ENCODE measurements at regions of chr1 and their contacts with region 1.

Region 1: DNA sequence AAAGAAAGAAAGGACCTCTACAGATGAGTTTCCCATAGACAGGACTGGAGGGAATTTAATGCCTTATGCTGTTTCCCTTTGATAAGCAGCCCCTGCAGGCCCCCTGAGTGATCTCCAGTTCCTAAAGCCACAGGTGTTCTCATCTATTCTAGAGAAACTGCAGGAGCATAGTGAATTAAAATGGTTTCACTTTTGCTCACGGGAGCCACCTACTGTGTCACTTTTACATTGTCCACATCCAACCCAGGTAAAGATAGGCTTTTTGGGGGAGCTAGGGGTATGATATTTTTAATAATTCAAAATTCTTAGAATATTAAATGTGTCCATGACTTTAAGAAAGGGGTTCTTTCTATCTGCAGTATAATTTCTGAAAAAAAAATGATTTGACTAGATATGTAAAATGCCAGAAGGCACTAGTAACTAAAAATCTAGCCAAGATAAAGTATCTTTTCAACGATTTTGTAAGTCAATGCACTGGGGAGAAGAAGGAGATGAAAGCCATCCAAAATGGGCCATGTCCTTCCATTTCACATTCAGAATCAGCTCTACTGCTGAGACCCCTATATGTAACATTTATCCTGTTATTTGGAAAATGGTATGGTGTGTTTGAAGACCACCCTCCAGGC is 267.3 kb upstream of the DUSP10 start:
- DNase-seq: no peak
- H3K4me3 ChIP-seq: no peak overlapping the region
- H3K27ac ChIP-seq: no peak overlapping the region
- H3K4me1 ChIP-seq: no peaks in the 10 kb centered on the region
- H3K27me3 ChIP-seq: no peaks in the 10 kb centered on the region
- CTCF ChIP-seq: peak; percentile 39

Region 2: GRCh38 chr1:221462345-221462744 is 546.9 kb before region 1 on chr1:
- intact Hi-C with region 1: loop called (anchors 10 kb)
- DNase-seq: no peak
- H3K4me3 ChIP-seq: no peak overlapping the region
- H3K27ac ChIP-seq: no peak overlapping the region
- H3K4me1 ChIP-seq: no peaks in the 10 kb centered on the region
- H3K27me3 ChIP-seq: no peaks in the 10 kb centered on the region
- CTCF ChIP-seq: no peak

Region 3: GRCh38 chr1:221741711-221742554 is 267.3 kb before region 1 on chr1 and contains the start of gene DUSP10:
- intact Hi-C with region 1: loop called (anchors 10 kb)
- DNase-seq: peak; percentile 99
- H3K4me3 ChIP-seq: peak within 1 kb of the TSS; percentile 65
- H3K27ac ChIP-seq: peak within 1 kb of the TSS; percentile 100
- H3K4me1 ChIP-seq: peaks cover 4% of the 10 kb centered on the region
- H3K27me3 ChIP-seq: no peaks in the 10 kb centered on the region
- CTCF ChIP-seq: no peak
- total RNA-seq, gene DUSP10: 2.8 to 8.1 TPM

Region 4: DNA sequence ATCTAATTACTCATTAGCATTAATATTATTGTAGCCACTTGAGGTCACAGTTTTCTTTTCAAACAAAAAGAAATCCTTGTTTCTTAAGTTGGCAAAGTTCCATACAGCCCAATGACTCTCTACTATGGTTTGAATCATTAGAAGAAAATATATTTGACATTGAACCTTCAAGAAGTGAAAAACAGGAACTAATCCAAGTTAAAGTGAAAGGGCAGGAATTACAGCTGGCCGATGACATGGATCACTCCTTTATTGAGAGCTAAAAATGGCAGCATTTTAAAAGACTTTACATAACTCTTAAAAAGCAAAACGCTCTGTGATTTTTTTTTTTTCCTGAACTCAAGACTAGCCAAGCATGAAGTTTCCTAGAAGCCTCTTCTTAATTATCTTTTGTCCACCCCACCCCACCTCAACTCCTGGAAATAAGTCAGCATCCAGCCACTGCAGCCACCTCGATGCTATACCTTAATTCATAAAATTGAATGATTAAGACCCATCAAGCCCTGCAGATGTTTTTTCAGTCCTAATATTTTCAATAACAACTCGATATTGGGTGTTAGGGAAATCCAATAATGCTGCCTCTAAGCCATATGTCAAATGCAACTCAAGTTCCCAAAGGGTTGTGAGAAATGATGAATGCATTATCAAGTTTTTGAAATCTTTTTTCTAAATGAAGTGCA is 215.6 kb after region 1 on chr1:
- intact Hi-C with region 1: no loop called
- DNase-seq: no peak
- H3K4me3 ChIP-seq: no peak overlapping the region
- H3K27ac ChIP-seq: no peak overlapping the region
- H3K4me1 ChIP-seq: no peaks in the 10 kb centered on the region
- H3K27me3 ChIP-seq: no peaks in the 10 kb centered on the region
- CTCF ChIP-seq: no peak

Measured in colonic mucosa (tissue), 4 donors.